Naive thymus-derived CD4-positive, alpha-beta T cell (primary cell): ENCODE measurements at regions of chr1 and their contacts with region 1.

Region 1: DNA sequence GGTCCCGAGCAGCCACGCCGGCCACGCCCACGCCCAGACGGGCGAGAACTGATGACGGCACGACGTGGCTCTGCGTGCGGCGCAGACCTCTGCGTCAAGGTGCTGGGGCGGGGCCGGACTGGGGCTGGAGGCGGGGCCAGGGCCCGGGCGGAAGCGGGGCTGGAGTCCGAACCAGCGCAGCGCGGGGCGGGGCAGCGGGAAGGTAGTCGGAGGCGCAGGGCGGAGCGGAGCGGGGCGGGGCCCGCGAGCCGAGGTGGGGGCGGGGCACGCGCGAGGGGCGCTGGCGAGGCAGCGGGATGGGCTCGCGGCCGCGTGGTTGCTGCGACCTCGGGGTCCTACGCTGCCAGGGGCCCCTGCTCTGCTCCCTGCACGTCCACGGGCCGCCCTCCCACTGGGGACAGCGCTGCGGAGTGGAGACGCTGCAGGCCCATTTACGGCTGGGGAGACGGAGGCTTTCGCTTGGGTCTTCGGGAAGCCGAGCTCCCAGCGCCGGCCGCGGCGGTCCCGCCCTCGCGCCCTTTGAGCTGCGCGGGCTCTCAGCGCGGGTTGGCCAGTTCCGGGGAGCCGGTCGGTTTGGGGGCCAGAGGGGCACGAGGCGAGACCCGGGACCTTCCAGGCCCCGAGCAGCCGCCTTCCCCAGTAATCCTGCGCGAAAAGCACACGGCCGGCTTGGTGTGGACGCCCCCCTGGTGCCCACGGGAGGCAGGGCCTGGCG is at the start of gene PEX10:
- DNase-seq: peak; percentile 95 to 100 (median 98)
- ATAC-seq: peak; percentile 97
- H3K4me3 ChIP-seq: peak within 1 kb of the TSS; percentile 71
- H3K4me3 Mint-ChIP-seq: peak within 1 kb of the TSS; percentile 83 to 91 (median 86)
- H3K27ac ChIP-seq: peak within 1 kb of the TSS; percentile 95
- H3K27ac Mint-ChIP-seq: peak within 1 kb of the TSS; percentile 31 to 94 (median 87)
- H3K4me1 ChIP-seq: peaks cover 37 to 45% of the 10 kb centered on the region in 2 donors
- H3K4me1 Mint-ChIP-seq: peaks cover 27 to 45% (median 35%) of the 10 kb centered on the region in 7 donors
- H3K27me3 ChIP-seq: no peaks in the 10 kb centered on the region
- H3K27me3 Mint-ChIP-seq: no peaks in the 10 kb centered on the region
- total RNA-seq, gene PEX10: 8.7 to 14.9 (median 12.3) TPM

Region 2: GRCh38 chr1:2642560-2643413 is 230.1 kb after region 1 on chr1:
- CTCF ChIA-PET with region 1: interaction called, 3 read pairs
- POLR2A ChIA-PET with region 1: no interaction called
- intact Hi-C with region 1: loop called (anchors 1 kb)
- DNase-seq: peak; percentile 92 to 97 (median 96)
- ATAC-seq: peak; percentile 89
- H3K4me3 ChIP-seq: peak overlapping the region; percentile 87
- H3K4me3 Mint-ChIP-seq: peak overlapping the region; percentile 85 to 96 (median 88)
- H3K27ac ChIP-seq: peak overlapping the region; percentile 97
- H3K27ac Mint-ChIP-seq: peak overlapping the region in 8 of 9 donors; percentile 76 to 93 (median 86)
- H3K4me1 ChIP-seq: peaks cover 9% of the 10 kb centered on the region in 2 donors
- H3K4me1 Mint-ChIP-seq: peaks cover 6 to 19% (median 15%) of the 10 kb centered on the region in 7 donors
- H3K27me3 ChIP-seq: no peaks in the 10 kb centered on the region
- H3K27me3 Mint-ChIP-seq: peaks cover 0 to 3% (median 0%) of the 10 kb centered on the region in 5 donors

Region 3: GRCh38 chr1:2786329-2787162 is 373.9 kb after region 1 on chr1:
- CTCF ChIA-PET with region 1: interaction called, 3 read pairs
- POLR2A ChIA-PET with region 1: interaction called, 5 read pairs
- intact Hi-C with region 1: loop called (anchors 1 kb)
- DNase-seq: peak; percentile 42 to 78 (median 63)
- ATAC-seq: peak; percentile 75
- H3K4me3 ChIP-seq: no peak overlapping the region
- H3K4me3 Mint-ChIP-seq: no peak overlapping the region
- H3K27ac ChIP-seq: no peak overlapping the region
- H3K27ac Mint-ChIP-seq: no peak overlapping the region
- H3K4me1 ChIP-seq: peaks cover 0 to 6% of the 10 kb centered on the region in 2 donors
- H3K4me1 Mint-ChIP-seq: peaks cover 4 to 15% (median 11%) of the 10 kb centered on the region in 7 donors
- H3K27me3 ChIP-seq: peaks cover 0 to 9% of the 10 kb centered on the region in 2 donors
- H3K27me3 Mint-ChIP-seq: peaks cover 23 to 37% (median 30%) of the 10 kb centered on the region in 5 donors

Region 4: DNA sequence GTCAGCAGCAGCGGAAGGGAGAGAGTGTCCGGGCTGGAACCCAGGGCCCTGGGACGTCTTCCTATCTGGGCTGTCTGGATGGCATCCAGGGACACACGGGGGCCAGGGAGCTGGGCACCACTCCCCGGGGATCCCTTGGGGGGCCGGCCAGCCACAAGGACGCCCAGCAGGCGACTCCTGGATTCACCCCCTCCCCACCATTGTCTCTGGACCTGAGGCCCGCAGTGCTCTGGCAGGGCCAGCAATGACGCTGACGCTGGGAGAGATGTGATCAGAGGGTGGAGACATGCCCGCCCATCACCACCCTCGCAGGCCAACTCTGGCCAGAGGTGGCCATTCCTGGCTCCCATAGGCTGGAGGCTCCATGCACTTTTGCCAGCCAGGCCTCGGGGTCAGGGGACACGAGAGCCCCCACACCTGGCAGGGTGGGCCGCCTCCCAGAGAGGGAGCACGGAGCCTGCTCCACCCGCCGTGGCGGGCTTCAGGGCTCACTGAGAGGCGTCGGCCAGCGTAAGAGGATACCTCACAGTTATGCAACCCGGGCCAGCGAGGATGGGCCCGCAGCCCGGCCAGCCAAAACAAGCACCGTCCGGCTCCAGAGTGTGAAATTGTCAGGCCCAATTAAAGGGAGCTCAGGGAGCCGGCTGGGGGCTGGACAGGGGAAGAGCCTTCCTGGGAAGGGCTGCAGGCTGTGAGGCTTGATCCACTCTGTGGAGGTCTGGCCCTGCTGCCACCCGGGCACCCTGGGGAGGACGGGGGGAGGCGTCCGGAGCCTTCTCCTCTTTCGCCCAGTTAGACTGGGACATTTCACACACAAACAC is 618.9 kb after region 1 on chr1:
- CTCF ChIA-PET with region 1: no interaction called
- POLR2A ChIA-PET with region 1: no interaction called
- intact Hi-C with region 1: loop called in 1 of 2 experiments (anchors 10 kb)
- DNase-seq: peak in 1 of 9 donors; percentile 6
- ATAC-seq: no peak
- H3K4me3 ChIP-seq: no peak overlapping the region
- H3K4me3 Mint-ChIP-seq: peak overlapping the region in 2 of 10 donors; percentile 56 to 59
- H3K27ac ChIP-seq: no peak overlapping the region
- H3K27ac Mint-ChIP-seq: peak overlapping the region in 2 of 9 donors; percentile 67 to 85
- H3K4me1 ChIP-seq: peaks cover 0 to 26% of the 10 kb centered on the region in 2 donors
- H3K4me1 Mint-ChIP-seq: peaks cover 5 to 35% (median 21%) of the 10 kb centered on the region in 7 donors
- H3K27me3 ChIP-seq: no peaks in the 10 kb centered on the region
- H3K27me3 Mint-ChIP-seq: peaks cover 0 to 2% (median 0%) of the 10 kb centered on the region in 5 donors

Region 5: GRCh38 chr1:3237994-3238702 is 825.5 kb after region 1 on chr1:
- CTCF ChIA-PET with region 1: no interaction called
- POLR2A ChIA-PET with region 1: no interaction called
- intact Hi-C with region 1: no loop called
- DNase-seq: no peak
- ATAC-seq: no peak
- H3K4me3 ChIP-seq: no peak overlapping the region
- H3K4me3 Mint-ChIP-seq: no peak overlapping the region
- H3K27ac ChIP-seq: no peak overlapping the region
- H3K27ac Mint-ChIP-seq: no peak overlapping the region
- H3K4me1 ChIP-seq: no peaks in the 10 kb centered on the region
- H3K4me1 Mint-ChIP-seq: no peaks in the 10 kb centered on the region
- H3K27me3 ChIP-seq: no peaks in the 10 kb centered on the region
- H3K27me3 Mint-ChIP-seq: no peaks in the 10 kb centered on the region